ENCODE measurements at regions of chr3 and their contacts with region 1.

Region 1: DNA sequence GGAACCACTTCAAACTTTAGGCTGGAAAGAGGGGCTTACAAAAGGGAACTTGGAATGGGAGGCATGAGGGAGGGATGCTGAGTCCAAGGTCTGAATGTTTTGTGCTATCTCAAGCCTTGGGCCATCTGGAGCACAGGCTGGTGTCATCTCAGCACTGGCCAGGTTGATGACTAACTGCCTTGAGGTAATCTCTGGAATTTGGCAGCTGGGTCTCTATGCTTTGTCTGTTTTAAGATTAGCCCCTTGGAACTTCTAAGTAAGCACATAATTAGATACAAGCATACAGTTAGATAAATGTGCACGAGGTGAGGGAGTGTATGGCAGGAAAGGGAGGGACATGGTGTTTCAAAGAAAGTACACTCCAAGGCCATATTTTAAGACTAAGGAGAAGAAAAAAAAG is 252.4 kb upstream of the CCDC54 start:
- DNase-seq: peak in 1 of 2 donors; percentile 42
- ATAC-seq: peak; percentile 61 to 95 (median 84)
- H3K4me3 ChIP-seq: no peak overlapping the region
- H3K27ac ChIP-seq: peak overlapping the region in 7 of 10 donors; percentile 6 to 53 (median 40)
- H3K4me1 ChIP-seq: peaks cover 0 to 20% (median 11%) of the 10 kb centered on the region in 9 donors
- H3K27me3 ChIP-seq: no peaks in the 10 kb centered on the region
- CTCF ChIP-seq: no peak

Region 2: GRCh38 chr3:107198581-107199181 is 73.8 kb after region 1 on chr3:
- intact Hi-C with region 1: loop called in 2 of 10 experiments (anchors 10 kb)
- DNase-seq: peak; percentile 51 to 86
- ATAC-seq: peak; percentile 86 to 95 (median 92)
- H3K4me3 ChIP-seq: peak overlapping the region in 5 of 10 donors; percentile 1 to 27 (median 8)
- H3K27ac ChIP-seq: peak overlapping the region; percentile 17 to 84 (median 68)
- H3K4me1 ChIP-seq: peaks cover 0 to 37% (median 21%) of the 10 kb centered on the region in 9 donors
- H3K27me3 ChIP-seq: no peaks in the 10 kb centered on the region
- CTCF ChIP-seq: no peak

Region 3: GRCh38 chr3:107206141-107206540 is 81.3 kb after region 1 on chr3:
- intact Hi-C with region 1: loop called in 1 of 10 experiments (anchors 10 kb)
- DNase-seq: peak in 1 of 2 donors; percentile 40
- ATAC-seq: no peak
- H3K4me3 ChIP-seq: no peak overlapping the region
- H3K27ac ChIP-seq: peak overlapping the region in 4 of 10 donors; percentile 69 to 82 (median 79)
- H3K4me1 ChIP-seq: peaks cover 11 to 52% (median 41%) of the 10 kb centered on the region in 9 donors
- H3K27me3 ChIP-seq: no peaks in the 10 kb centered on the region
- CTCF ChIP-seq: peak; percentile 10 to 73 (median 57)

Measured in heart right ventricle (tissue), 16 donors.